ENCODE measurements at regions of chr18 and their contacts with region 1.

Region 1: DNA sequence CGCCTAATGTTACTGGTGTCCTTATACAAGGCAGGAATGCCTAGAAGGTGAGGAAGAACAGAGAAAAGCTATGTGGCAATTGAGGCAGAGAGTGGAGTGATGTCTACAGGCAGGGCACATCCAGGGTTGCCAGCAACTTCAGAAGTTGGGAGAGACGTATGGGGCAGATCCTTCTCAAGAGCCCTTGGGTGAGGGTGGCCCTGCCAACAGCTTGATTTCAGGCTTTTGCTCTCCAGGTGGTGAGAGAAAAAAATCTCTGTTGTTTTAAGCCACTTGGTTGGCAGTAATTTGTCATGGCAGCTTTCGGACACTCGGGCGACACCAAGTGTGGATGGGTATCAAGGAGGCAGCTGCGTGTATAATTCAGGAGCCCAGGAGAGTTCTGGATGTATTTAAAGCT is 217.4 kb upstream of the SMIM21 start:
- DNase-seq: no peak
- H3K4me3 ChIP-seq: no peak overlapping the region
- H3K27ac ChIP-seq: no peak overlapping the region
- H3K4me1 ChIP-seq: peaks cover 0 to 24% (median 20%) of the 10 kb centered on the region in 4 donors
- H3K27me3 ChIP-seq: no peaks in the 10 kb centered on the region
- CTCF ChIP-seq: no peak
- EP300 ChIP-seq: no peak
- POLR2A ChIP-seq: no peak

Region 2: GRCh38 chr18:75574187-75574586 is 70.7 kb before region 1 on chr18:
- intact Hi-C with region 1: no loop called
- DNase-seq: no peak
- H3K4me3 ChIP-seq: no peak overlapping the region
- H3K27ac ChIP-seq: no peak overlapping the region
- H3K4me1 ChIP-seq: no peaks in the 10 kb centered on the region
- H3K27me3 ChIP-seq: no peaks in the 10 kb centered on the region
- CTCF ChIP-seq: no peak
- EP300 ChIP-seq: no peak
- POLR2A ChIP-seq: no peak

Region 3: DNA sequence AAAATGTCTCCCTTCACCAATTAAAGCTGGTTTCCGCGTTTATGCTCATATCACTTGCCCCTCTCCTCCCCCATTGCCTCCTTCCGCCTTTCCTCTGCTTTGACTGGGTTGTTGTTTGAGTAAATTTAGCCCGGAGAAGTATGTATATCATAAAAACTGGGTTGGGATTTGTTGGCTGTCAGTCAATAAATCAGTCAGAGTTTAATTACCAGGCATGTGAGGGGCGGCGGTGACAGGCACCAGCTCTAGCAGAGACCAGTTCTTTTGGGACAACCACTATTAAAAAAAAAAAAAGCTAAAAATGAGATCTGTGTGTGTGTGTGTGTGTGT is 165.0 kb after region 1 on chr18:
- intact Hi-C with region 1: loop called (anchors 10 kb)
- DNase-seq: no peak
- H3K4me3 ChIP-seq: no peak overlapping the region
- H3K27ac ChIP-seq: peak overlapping the region in 3 of 4 donors; percentile 45 to 73 (median 59)
- H3K4me1 ChIP-seq: peaks cover 0 to 32% (median 25%) of the 10 kb centered on the region in 4 donors
- H3K27me3 ChIP-seq: no peaks in the 10 kb centered on the region
- CTCF ChIP-seq: no peak
- EP300 ChIP-seq: no peak
- POLR2A ChIP-seq: no peak